ENCODE measurements at regions of chr5 and their contacts with region 1.

Region 1: GRCh38 chr5:17216176-17216973 is 1.1 kb upstream of the BASP1 start:
- DNase-seq: peak; percentile 92
- ATAC-seq: peak; percentile 42
- H3K4me3 ChIP-seq: peak overlapping the region; percentile 55 to 87 (median 75)
- H3K4me3 Mint-ChIP-seq: peak overlapping the region; percentile 92
- H3K27ac ChIP-seq: peak overlapping the region; percentile 59 to 78
- H3K27ac Mint-ChIP-seq: peak overlapping the region; percentile 96
- H3K4me1 ChIP-seq: peaks cover 26 to 31% of the 10 kb centered on the region in 2 donors
- H3K4me1 Mint-ChIP-seq: peaks cover 41% of the 10 kb centered on the region
- H3K27me3 ChIP-seq: no peaks in the 10 kb centered on the region
- H3K27me3 Mint-ChIP-seq: no peaks in the 10 kb centered on the region
- CTCF ChIP-seq: peak; percentile 91

Region 2: DNA sequence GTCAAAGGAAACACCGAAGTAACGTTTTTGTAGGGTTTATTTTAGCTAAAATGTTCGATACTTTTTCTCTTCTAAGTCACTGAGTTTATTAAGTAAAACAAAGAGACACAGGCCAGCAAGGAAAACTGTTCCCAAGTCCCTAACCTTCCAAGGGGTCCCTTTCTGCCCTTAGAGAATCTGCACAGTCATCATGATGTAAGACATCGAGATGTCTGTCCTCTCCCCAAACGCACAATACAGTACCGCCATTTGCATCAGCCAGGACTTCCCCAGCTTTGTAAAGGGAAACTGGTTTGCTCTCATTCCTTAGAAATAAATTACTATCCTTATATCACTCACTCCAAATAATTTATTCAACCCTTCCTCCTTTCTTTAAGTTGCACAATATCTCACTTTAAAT is 1126.1 kb before region 1 on chr5:
- CTCF ChIA-PET with region 1: no interaction called
- POLR2A ChIA-PET with region 1: no interaction called
- intact Hi-C with region 1: no loop called
- DNase-seq: no peak
- ATAC-seq: no peak
- H3K4me3 ChIP-seq: no peak overlapping the region
- H3K4me3 Mint-ChIP-seq: no peak overlapping the region
- H3K27ac ChIP-seq: no peak overlapping the region
- H3K27ac Mint-ChIP-seq: no peak overlapping the region
- H3K4me1 ChIP-seq: no peaks in the 10 kb centered on the region
- H3K4me1 Mint-ChIP-seq: no peaks in the 10 kb centered on the region
- H3K27me3 ChIP-seq: no peaks in the 10 kb centered on the region
- H3K27me3 Mint-ChIP-seq: no peaks in the 10 kb centered on the region
- CTCF ChIP-seq: no peak

Region 3: GRCh38 chr5:16465544-16466466 is 750.6 kb before region 1 on chr5 and contains the start of gene ZNF622:
- CTCF ChIA-PET with region 1: interaction called, 4 read pairs
- POLR2A ChIA-PET with region 1: no interaction called
- intact Hi-C with region 1: loop called (anchors 2 kb)
- DNase-seq: peak; percentile 92
- ATAC-seq: peak; percentile 96
- H3K4me3 ChIP-seq: peak within 1 kb of the TSS; percentile 90 to 98 (median 96)
- H3K4me3 Mint-ChIP-seq: peak within 1 kb of the TSS; percentile 96
- H3K27ac ChIP-seq: peak within 1 kb of the TSS; percentile 79 to 90
- H3K27ac Mint-ChIP-seq: peak within 1 kb of the TSS; percentile 94
- H3K4me1 ChIP-seq: peaks cover 41 to 43% of the 10 kb centered on the region in 2 donors
- H3K4me1 Mint-ChIP-seq: peaks cover 78% of the 10 kb centered on the region
- H3K27me3 ChIP-seq: no peaks in the 10 kb centered on the region
- H3K27me3 Mint-ChIP-seq: no peaks in the 10 kb centered on the region
- CTCF ChIP-seq: no peak
- total RNA-seq, gene ZNF622: 34.6 and 37.1 TPM in 2 replicates

Region 4: GRCh38 chr5:17228821-17229291 is 12.5 kb after region 1 on chr5:
- CTCF ChIA-PET with region 1: interaction called, 21 read pairs
- POLR2A ChIA-PET with region 1: no interaction called
- intact Hi-C with region 1: no loop called
- DNase-seq: no peak
- ATAC-seq: no peak
- H3K4me3 ChIP-seq: no peak overlapping the region
- H3K4me3 Mint-ChIP-seq: peak overlapping the region; percentile 75
- H3K27ac ChIP-seq: peak overlapping the region; percentile 14 to 69
- H3K27ac Mint-ChIP-seq: peak overlapping the region; percentile 84
- H3K4me1 ChIP-seq: peaks cover 45 to 47% of the 10 kb centered on the region in 2 donors
- H3K4me1 Mint-ChIP-seq: peaks cover 80% of the 10 kb centered on the region
- H3K27me3 ChIP-seq: no peaks in the 10 kb centered on the region
- H3K27me3 Mint-ChIP-seq: no peaks in the 10 kb centered on the region
- CTCF ChIP-seq: no peak

Region 5: GRCh38 chr5:17316970-17317459 is 100.6 kb after region 1 on chr5:
- CTCF ChIA-PET with region 1: interaction called, 3 read pairs
- POLR2A ChIA-PET with region 1: interaction called, 5 read pairs
- intact Hi-C with region 1: loop called (anchors 1 kb)
- DNase-seq: peak; percentile 70
- ATAC-seq: peak; percentile 53
- H3K4me3 ChIP-seq: peak overlapping the region in 3 of 5 experiments; percentile 10 to 58 (median 32)
- H3K4me3 Mint-ChIP-seq: peak overlapping the region; percentile 53
- H3K27ac ChIP-seq: peak overlapping the region; percentile 71 to 72
- H3K27ac Mint-ChIP-seq: peak overlapping the region; percentile 76
- H3K4me1 ChIP-seq: peaks cover 53 to 58% of the 10 kb centered on the region in 2 donors
- H3K4me1 Mint-ChIP-seq: peaks cover 57% of the 10 kb centered on the region
- H3K27me3 ChIP-seq: no peaks in the 10 kb centered on the region
- H3K27me3 Mint-ChIP-seq: no peaks in the 10 kb centered on the region
- CTCF ChIP-seq: no peak

Region 6: GRCh38 chr5:17769277-17769676 is 552.9 kb after region 1 on chr5:
- CTCF ChIA-PET with region 1: interaction called, 13 read pairs
- POLR2A ChIA-PET with region 1: no interaction called
- intact Hi-C with region 1: no loop called
- DNase-seq: no peak
- ATAC-seq: no peak
- H3K4me3 ChIP-seq: no peak overlapping the region
- H3K4me3 Mint-ChIP-seq: no peak overlapping the region
- H3K27ac ChIP-seq: no peak overlapping the region
- H3K27ac Mint-ChIP-seq: no peak overlapping the region
- H3K4me1 ChIP-seq: no peaks in the 10 kb centered on the region
- H3K4me1 Mint-ChIP-seq: no peaks in the 10 kb centered on the region
- H3K27me3 ChIP-seq: peaks cover 0 to 4% (median 0%) of the 10 kb centered on the region in 4 experiments
- H3K27me3 Mint-ChIP-seq: peaks cover 4% of the 10 kb centered on the region
- CTCF ChIP-seq: no peak

Region 7: GRCh38 chr5:18281682-18282557 is 1065.5 kb after region 1 on chr5:
- CTCF ChIA-PET with region 1: interaction called, 59 read pairs
- POLR2A ChIA-PET with region 1: interaction called, 8 read pairs
- intact Hi-C with region 1: no loop called
- DNase-seq: peak; percentile 25
- ATAC-seq: no peak
- H3K4me3 ChIP-seq: no peak overlapping the region
- H3K4me3 Mint-ChIP-seq: no peak overlapping the region
- H3K27ac ChIP-seq: no peak overlapping the region
- H3K27ac Mint-ChIP-seq: no peak overlapping the region
- H3K4me1 ChIP-seq: no peaks in the 10 kb centered on the region
- H3K4me1 Mint-ChIP-seq: no peaks in the 10 kb centered on the region
- H3K27me3 ChIP-seq: no peaks in the 10 kb centered on the region
- H3K27me3 Mint-ChIP-seq: peaks cover 4% of the 10 kb centered on the region
- CTCF ChIP-seq: peak; percentile 48

Region 8: DNA sequence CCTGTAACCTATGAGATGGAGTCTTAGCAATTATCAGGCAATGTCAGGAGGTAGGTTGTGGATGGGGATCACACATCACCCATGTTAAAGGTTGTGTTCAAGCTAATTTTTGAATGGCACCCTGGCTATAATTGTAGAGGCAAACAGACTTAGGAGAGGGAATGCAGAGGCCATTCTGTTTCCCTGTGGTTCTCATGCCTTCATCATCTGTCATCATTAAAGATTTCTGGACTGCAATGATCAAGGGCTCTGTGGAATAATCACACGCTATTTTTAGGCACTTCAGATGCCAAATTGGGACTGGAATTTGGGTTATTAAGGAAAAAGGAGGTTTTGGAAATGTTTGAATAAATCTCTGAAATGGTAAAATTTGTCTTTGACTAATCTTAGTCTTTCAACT is 1483.3 kb after region 1 on chr5:
- CTCF ChIA-PET with region 1: no interaction called
- POLR2A ChIA-PET with region 1: no interaction called
- intact Hi-C with region 1: loop called (anchors 5 kb)
- DNase-seq: no peak
- ATAC-seq: no peak
- H3K4me3 ChIP-seq: no peak overlapping the region
- H3K4me3 Mint-ChIP-seq: no peak overlapping the region
- H3K27ac ChIP-seq: peak overlapping the region in 1 of 2 donors; percentile 89
- H3K27ac Mint-ChIP-seq: no peak overlapping the region
- H3K4me1 ChIP-seq: peaks cover 13 to 25% of the 10 kb centered on the region in 2 donors
- H3K4me1 Mint-ChIP-seq: peaks cover 31% of the 10 kb centered on the region
- H3K27me3 ChIP-seq: no peaks in the 10 kb centered on the region
- H3K27me3 Mint-ChIP-seq: no peaks in the 10 kb centered on the region
- CTCF ChIP-seq: no peak

Measured in B cell (primary cell).